ENCODE measurements at regions of chr2 and their contacts with region 1.

Region 1: DNA sequence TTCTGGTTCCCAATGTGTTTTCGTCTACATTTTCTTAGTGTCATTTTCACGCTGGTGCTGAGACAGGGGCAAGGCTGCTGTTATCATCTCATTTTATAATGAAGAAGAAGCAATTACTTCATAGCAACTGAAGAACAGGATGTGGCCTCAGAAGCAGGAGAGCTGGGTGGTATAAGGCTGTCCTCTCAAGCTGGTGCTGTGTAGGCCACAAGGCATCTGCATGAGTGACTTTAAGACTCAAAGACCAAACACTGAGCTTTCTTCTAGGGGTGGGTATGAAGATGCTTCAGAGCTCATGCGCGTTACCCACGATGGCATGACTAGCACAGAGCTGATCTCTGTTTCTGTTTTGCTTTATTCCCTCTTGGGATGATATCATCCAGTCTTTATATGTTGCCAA is 7.3 kb downstream of the IL36G start:
- DNase-seq: peak; percentile 49
- ATAC-seq: peak; percentile 100
- H3K4me3 Mint-ChIP-seq: no peak overlapping the region
- H3K27ac Mint-ChIP-seq: peak overlapping the region; percentile 64
- H3K4me1 Mint-ChIP-seq: peaks cover 24% of the 10 kb centered on the region
- H3K27me3 Mint-ChIP-seq: no peaks in the 10 kb centered on the region

Region 2: DNA sequence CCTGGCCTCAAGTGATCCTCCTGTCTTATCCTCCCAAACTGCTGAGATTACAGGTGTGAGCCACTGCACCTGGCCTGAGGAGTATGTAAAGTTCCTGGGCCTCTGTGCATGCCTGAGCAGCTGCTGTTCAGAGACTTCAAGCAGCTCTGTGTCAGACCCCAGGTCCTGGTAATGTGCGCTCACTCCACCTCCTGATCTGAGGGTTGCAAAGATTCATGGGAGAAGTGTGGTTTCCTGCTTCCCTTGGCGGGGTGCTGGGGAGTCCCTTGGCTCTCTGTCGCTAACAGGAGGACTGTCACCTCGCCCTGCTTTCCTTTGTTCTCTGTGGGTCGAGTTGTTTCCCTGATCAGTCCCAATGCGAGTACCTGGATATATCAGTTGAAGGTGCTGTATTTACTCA is 11.5 kb after region 1 on chr2:
- POLR2A ChIA-PET with region 1: interaction called, 14 read pairs
- DNase-seq: peak; percentile 69
- ATAC-seq: peak; percentile 99
- H3K4me3 Mint-ChIP-seq: peak overlapping the region; percentile 54
- H3K27ac Mint-ChIP-seq: peak overlapping the region; percentile 95
- H3K4me1 Mint-ChIP-seq: peaks cover 25% of the 10 kb centered on the region
- H3K27me3 Mint-ChIP-seq: no peaks in the 10 kb centered on the region